CD4-positive, alpha-beta memory T cell (primary cell): ENCODE measurements at regions of chr12 and their contacts with region 1.

Region 1: GRCh38 chr12:105053116-105053572 is 31.1 kb downstream of the ALDH1L2 start:
- DNase-seq: peak; percentile 71 to 77 (median 75)
- H3K4me3 ChIP-seq: no peak overlapping the region
- H3K4me3 Mint-ChIP-seq: no peak overlapping the region
- H3K27ac ChIP-seq: no peak overlapping the region
- H3K27ac Mint-ChIP-seq: no peak overlapping the region
- H3K4me1 ChIP-seq: no peaks in the 10 kb centered on the region
- H3K4me1 Mint-ChIP-seq: peaks cover 0 to 3% (median under 1%) of the 10 kb centered on the region in 4 donors
- H3K27me3 ChIP-seq: no peaks in the 10 kb centered on the region
- H3K27me3 Mint-ChIP-seq: peaks cover 2 to 3% of the 10 kb centered on the region in 2 donors

Region 2: GRCh38 chr12:104201238-104202001 is 851.7 kb before region 1 on chr12:
- CTCF ChIA-PET with region 1: interaction called, 6 read pairs
- POLR2A ChIA-PET with region 1: no interaction called
- intact Hi-C with region 1: loop called (anchors 1 kb)
- DNase-seq: peak; percentile 59 to 69 (median 65)
- H3K4me3 ChIP-seq: no peak overlapping the region
- H3K4me3 Mint-ChIP-seq: peak overlapping the region in 2 of 8 donors; percentile 3 to 22
- H3K27ac ChIP-seq: no peak overlapping the region
- H3K27ac Mint-ChIP-seq: no peak overlapping the region
- H3K4me1 ChIP-seq: no peaks in the 10 kb centered on the region
- H3K4me1 Mint-ChIP-seq: peaks cover 2 to 4% (median 3%) of the 10 kb centered on the region in 4 donors
- H3K27me3 ChIP-seq: no peaks in the 10 kb centered on the region
- H3K27me3 Mint-ChIP-seq: peaks cover 7 to 8% of the 10 kb centered on the region in 2 donors

Region 3: GRCh38 chr12:104680066-104680465 is 373.1 kb before region 1 on chr12:
- CTCF ChIA-PET with region 1: interaction called, 3 read pairs
- POLR2A ChIA-PET with region 1: interaction called, 3 read pairs
- intact Hi-C with region 1: loop called (anchors 1 kb)
- DNase-seq: peak in 4 of 5 donors; percentile 36 to 51 (median 39)
- H3K4me3 ChIP-seq: no peak overlapping the region
- H3K4me3 Mint-ChIP-seq: peak overlapping the region in 3 of 8 donors; percentile 14 to 45 (median 17)
- H3K27ac ChIP-seq: no peak overlapping the region
- H3K27ac Mint-ChIP-seq: peak overlapping the region in 5 of 7 donors; percentile 2 to 86 (median 82)
- H3K4me1 ChIP-seq: peaks cover 53% of the 10 kb centered on the region
- H3K4me1 Mint-ChIP-seq: peaks cover 48 to 83% (median 65%) of the 10 kb centered on the region in 4 donors
- H3K27me3 ChIP-seq: no peaks in the 10 kb centered on the region
- H3K27me3 Mint-ChIP-seq: no peaks in the 10 kb centered on the region

Region 4: GRCh38 chr12:104938371-104938770 is 114.8 kb before region 1 on chr12:
- CTCF ChIA-PET with region 1: no interaction called
- POLR2A ChIA-PET with region 1: no interaction called
- intact Hi-C with region 1: no loop called
- DNase-seq: no peak
- H3K4me3 ChIP-seq: no peak overlapping the region
- H3K4me3 Mint-ChIP-seq: no peak overlapping the region
- H3K27ac ChIP-seq: no peak overlapping the region
- H3K27ac Mint-ChIP-seq: no peak overlapping the region
- H3K4me1 ChIP-seq: no peaks in the 10 kb centered on the region
- H3K4me1 Mint-ChIP-seq: no peaks in the 10 kb centered on the region
- H3K27me3 ChIP-seq: no peaks in the 10 kb centered on the region
- H3K27me3 Mint-ChIP-seq: peaks cover 0 to 5% of the 10 kb centered on the region in 2 donors

Region 5: DNA sequence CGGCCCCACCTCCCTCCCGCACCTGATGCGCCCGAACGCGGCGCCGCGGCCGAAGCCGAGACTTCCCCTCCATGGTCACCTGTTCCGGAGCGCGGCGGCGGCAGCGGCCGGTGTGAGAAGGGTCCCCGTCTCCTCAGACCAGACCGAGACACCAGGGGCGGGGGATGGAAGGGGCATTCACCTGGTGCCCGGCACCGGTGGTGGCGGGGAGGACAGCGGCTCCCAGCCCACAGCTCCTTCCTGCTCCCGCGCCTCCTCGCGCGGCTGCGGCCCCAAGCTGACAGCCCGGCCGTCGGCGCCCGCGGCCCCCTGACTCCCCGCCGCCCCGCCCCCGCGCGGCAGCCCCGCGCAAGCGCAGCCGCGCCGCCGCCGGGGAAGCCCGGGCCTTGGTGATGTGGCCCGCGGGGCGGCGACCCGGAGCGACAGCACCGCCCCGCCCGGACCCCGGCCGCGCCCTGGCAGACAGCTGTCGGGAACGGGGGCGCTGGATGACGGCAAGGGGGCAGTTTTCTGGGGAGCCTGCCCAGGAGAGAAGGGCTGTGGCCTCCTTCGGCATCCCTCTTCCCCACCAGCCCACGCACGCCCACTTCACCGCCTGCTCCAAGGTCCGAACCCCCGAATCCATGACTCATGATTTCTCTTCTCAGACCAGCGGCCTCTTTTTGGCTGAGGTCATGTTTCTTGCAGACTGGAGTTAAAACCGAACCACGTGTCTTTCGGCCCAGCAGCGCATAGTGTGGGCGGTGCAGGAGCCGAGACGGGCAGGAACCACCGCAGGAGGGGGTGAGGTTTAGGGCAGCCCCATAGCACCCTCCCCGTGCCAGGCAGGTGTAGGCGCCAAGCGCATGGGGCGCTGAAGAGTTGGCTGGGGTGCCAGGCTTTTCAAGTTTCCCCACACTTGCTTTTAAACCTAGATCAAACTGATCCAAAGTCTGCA is 94.9 kb before region 1 on chr12 and contains the start of gene SLC41A2:
- CTCF ChIA-PET with region 1: interaction called, 4 read pairs
- POLR2A ChIA-PET with region 1: no interaction called
- intact Hi-C with region 1: loop called (anchors 1 kb)
- DNase-seq: peak; percentile 77 to 92 (median 81)
- H3K4me3 ChIP-seq: peak within 1 kb of the TSS; percentile 81 to 87
- H3K4me3 Mint-ChIP-seq: peak within 1 kb of the TSS; percentile 94 to 98 (median 97)
- H3K27ac ChIP-seq: peak within 1 kb of the TSS; percentile 68
- H3K27ac Mint-ChIP-seq: peak within 1 kb of the TSS; percentile 90 to 99 (median 96)
- H3K4me1 ChIP-seq: peaks cover 17% of the 10 kb centered on the region
- H3K4me1 Mint-ChIP-seq: peaks cover 13 to 30% (median 21%) of the 10 kb centered on the region in 4 donors
- H3K27me3 ChIP-seq: no peaks in the 10 kb centered on the region
- H3K27me3 Mint-ChIP-seq: peaks cover 0 to 3% of the 10 kb centered on the region in 2 donors
- total RNA-seq, gene SLC41A2: 3.6 to 3.7 TPM

Region 6: DNA sequence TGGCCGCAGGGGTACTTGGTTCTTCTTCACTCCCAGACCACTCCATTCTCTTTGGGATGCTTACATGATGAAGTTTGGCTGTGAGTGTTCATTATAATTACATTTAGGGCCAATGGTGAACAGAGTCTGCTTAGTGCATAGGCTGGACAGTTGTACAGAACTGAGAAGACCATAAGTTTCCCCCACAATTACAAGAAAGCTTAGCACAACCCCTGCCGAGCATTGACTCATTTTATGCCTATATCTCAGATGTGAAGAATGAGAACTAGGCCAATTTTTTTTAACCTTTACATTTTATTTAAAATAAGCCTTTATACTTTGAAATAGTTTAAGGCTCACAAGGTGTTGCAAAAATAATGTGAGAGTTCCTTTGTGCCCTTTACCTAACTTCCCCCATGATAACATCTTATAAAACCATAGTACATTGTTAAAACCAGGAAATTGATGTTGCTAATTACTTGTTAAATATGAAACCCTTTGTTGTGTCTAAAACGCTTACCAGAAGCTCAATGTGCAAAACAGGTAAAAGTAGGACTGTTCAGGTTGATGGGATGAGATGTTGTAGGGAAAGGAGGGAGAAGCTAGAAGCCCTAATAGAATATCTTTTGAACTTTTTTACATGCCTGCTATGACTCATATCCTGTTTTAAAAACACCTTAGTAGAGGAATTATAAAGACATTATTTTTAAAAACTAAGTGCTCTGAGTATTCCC is 16.1 kb before region 1 on chr12:
- CTCF ChIA-PET with region 1: interaction called, 26 read pairs
- POLR2A ChIA-PET with region 1: interaction called, 3 read pairs
- intact Hi-C with region 1: no loop called
- DNase-seq: peak in 4 of 5 donors; percentile 10 to 35 (median 25)
- H3K4me3 ChIP-seq: no peak overlapping the region
- H3K4me3 Mint-ChIP-seq: peak overlapping the region; percentile 43 to 89 (median 76)
- H3K27ac ChIP-seq: peak overlapping the region; percentile 43
- H3K27ac Mint-ChIP-seq: peak overlapping the region; percentile 65 to 98 (median 94)
- H3K4me1 ChIP-seq: peaks cover 23% of the 10 kb centered on the region
- H3K4me1 Mint-ChIP-seq: peaks cover 21 to 42% (median 28%) of the 10 kb centered on the region in 4 donors
- H3K27me3 ChIP-seq: no peaks in the 10 kb centered on the region
- H3K27me3 Mint-ChIP-seq: no peaks in the 10 kb centered on the region